ENCODE measurements at regions of chr1 and their contacts with region 1.

Region 1: GRCh38 chr1:40612345-40612831 is 53.1 kb downstream of the RIMS3 start:
- DNase-seq: peak; percentile 53
- H3K4me3 Mint-ChIP-seq: no peak overlapping the region
- H3K27ac Mint-ChIP-seq: no peak overlapping the region
- H3K4me1 Mint-ChIP-seq: no peaks in the 10 kb centered on the region
- H3K27me3 Mint-ChIP-seq: peaks cover 11% of the 10 kb centered on the region

Region 2: DNA sequence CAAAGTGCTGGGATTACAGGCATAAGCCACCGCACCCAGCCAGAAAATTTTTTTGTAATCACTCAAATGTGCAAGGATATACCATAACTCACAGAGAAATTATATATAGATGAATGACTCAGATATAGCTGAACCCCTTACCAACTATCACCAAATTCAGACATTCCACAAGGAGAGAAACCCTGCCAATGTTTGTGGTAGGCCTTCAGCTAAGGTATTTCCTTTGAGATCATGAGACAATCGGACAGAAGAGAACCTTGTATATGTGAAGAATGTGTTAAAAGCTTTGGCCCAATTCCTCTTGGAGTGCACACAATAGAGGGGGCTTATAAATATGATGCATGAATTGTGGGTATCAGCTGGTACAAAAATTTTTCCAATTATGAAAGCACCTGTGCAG is 30.3 kb before region 1 on chr1:
- intact Hi-C with region 1: no loop called
- DNase-seq: no peak
- H3K4me3 Mint-ChIP-seq: no peak overlapping the region
- H3K27ac Mint-ChIP-seq: no peak overlapping the region
- H3K4me1 Mint-ChIP-seq: peaks cover 8% of the 10 kb centered on the region
- H3K27me3 Mint-ChIP-seq: no peaks in the 10 kb centered on the region

Region 3: GRCh38 chr1:40668769-40669525 is 56.6 kb after region 1 on chr1:
- intact Hi-C with region 1: loop called (anchors 2 kb)
- DNase-seq: peak; percentile 74
- H3K4me3 Mint-ChIP-seq: no peak overlapping the region
- H3K27ac Mint-ChIP-seq: no peak overlapping the region
- H3K4me1 Mint-ChIP-seq: peaks cover 11% of the 10 kb centered on the region
- H3K27me3 Mint-ChIP-seq: peaks cover 4% of the 10 kb centered on the region

Region 4: DNA sequence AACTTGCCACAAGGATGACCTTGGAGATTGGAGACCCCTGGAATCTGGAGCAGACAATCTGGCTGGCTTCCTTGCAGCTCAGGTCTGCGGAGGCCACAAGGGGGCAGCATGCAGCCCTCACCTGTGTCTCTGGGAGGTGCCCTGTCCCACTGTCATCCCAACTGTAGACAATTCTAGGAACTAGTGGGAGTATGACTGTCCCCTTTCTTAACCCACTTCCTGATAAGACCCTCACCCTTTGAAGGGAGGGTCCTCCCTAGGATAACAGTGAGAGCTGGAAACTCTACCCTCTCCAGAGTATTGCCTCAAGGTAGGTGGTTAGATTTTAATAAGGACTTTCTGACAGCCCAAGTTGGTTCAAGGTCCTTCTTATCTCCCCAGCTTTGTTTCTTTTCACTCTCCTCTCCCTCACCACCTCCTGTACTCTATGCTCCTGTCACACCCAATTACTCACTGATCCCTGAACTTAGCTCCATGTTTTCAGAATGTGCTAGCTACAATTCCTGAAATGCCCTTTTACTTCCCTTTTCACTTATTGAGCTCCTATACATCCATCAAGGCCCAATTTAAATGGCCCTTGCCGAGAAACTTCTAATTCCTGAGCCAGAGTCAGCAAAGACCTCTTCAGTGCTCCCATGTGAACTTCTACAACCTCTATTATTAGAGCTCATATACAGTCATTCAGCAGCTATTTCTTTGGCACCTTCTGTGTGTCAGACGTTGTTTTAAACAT is 162.0 kb after region 1 on chr1:
- intact Hi-C with region 1: loop called (anchors 10 kb)
- DNase-seq: peak; percentile 41
- H3K4me3 Mint-ChIP-seq: no peak overlapping the region
- H3K27ac Mint-ChIP-seq: peak overlapping the region; percentile 46
- H3K4me1 Mint-ChIP-seq: peaks cover 5% of the 10 kb centered on the region
- H3K27me3 Mint-ChIP-seq: no peaks in the 10 kb centered on the region

Region 5: GRCh38 chr1:40849801-40850592 is 237.6 kb after region 1 on chr1:
- intact Hi-C with region 1: loop called (anchors 1 kb)
- DNase-seq: peak; percentile 73
- H3K4me3 Mint-ChIP-seq: no peak overlapping the region
- H3K27ac Mint-ChIP-seq: peak overlapping the region; percentile 42
- H3K4me1 Mint-ChIP-seq: peaks cover 19% of the 10 kb centered on the region
- H3K27me3 Mint-ChIP-seq: peaks cover 4% of the 10 kb centered on the region